Breast epithelium (tissue), 4 donors: ENCODE measurements at regions of chr6 and their contacts with region 1.

Region 1: DNA sequence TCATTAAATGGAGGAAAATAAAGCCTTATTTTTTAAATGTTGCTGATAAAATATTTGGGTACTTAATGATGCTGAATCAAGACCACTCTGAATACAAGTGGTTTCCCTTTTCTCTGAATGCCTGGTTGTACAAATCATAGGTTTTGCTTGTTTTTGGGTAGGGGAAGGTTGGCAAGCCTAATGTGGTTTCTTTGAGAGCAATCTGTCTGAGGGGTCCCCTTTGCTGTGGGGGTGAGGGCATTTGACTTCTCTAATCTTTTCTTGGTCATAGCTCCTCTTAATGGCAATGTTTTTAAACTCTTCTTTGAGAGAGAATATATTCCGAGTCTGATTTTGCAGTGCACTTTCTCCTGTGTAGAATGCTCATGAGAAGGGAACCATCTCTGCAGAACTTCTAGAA is 99.2 kb downstream of the SOX4 start:
- DNase-seq: no peak
- H3K4me3 ChIP-seq: no peak overlapping the region
- H3K27ac ChIP-seq: no peak overlapping the region
- H3K4me1 ChIP-seq: no peaks in the 10 kb centered on the region
- H3K27me3 ChIP-seq: no peaks in the 10 kb centered on the region
- CTCF ChIP-seq: no peak
- POLR2A ChIP-seq: no peak

Region 2: DNA sequence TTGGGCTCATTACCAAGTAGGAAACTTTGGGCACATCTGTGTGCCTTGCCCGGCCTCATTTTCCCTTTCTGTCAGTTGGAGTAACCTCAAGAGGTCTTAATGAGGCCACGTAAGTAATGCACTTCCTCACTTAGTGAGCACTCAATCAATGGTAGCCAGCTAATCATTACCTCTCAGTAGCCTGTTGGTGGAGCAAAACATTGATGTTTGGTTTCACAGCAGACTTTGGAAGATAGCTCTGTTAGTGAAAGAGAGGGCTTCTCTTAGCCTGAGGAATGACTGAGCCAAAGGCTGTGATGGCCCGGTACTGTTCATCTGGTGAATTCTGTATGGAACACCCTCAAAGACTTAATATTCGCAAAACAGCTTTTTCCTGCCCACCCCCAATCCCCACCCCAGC is 1911.5 kb before region 1 on chr6:
- intact Hi-C with region 1: no loop called
- DNase-seq: no peak
- H3K4me3 ChIP-seq: no peak overlapping the region
- H3K27ac ChIP-seq: no peak overlapping the region
- H3K4me1 ChIP-seq: no peaks in the 10 kb centered on the region
- H3K27me3 ChIP-seq: no peaks in the 10 kb centered on the region
- CTCF ChIP-seq: no peak
- POLR2A ChIP-seq: no peak

Region 3: DNA sequence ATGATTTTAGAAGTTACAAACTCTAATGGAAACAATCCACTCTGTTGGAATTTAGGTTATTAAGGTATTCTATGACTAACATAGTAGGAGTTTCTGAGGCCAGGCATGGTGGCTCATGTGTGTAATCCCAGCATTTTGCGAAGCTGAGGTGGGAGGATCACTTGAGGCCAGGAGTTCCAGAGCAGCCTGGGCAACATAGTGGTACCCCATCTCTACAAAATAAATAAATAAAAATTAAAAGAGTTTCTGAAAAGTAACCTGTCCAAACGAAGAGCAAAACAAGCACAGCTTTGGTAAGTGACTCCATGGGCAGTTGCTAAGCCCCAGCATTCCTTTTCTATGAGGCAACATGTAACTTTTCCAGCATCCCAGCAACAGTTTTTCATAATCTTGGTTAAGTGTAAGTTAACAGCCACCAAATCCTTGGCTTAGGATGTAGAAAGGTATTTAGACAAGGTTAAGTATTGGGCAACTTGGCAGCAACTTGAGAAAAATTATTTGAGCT is 12.9 kb before region 1 on chr6:
- intact Hi-C with region 1: loop called (anchors 1 kb)
- DNase-seq: no peak
- H3K4me3 ChIP-seq: no peak overlapping the region
- H3K27ac ChIP-seq: peak overlapping the region; percentile 82 to 90
- H3K4me1 ChIP-seq: no peaks in the 10 kb centered on the region
- H3K27me3 ChIP-seq: no peaks in the 10 kb centered on the region
- CTCF ChIP-seq: no peak
- POLR2A ChIP-seq: no peak

Region 4: GRCh38 chr6:22497276-22497675 is 804.6 kb after region 1 on chr6:
- intact Hi-C with region 1: no loop called
- DNase-seq: no peak
- H3K4me3 ChIP-seq: no peak overlapping the region
- H3K27ac ChIP-seq: no peak overlapping the region
- H3K4me1 ChIP-seq: no peaks in the 10 kb centered on the region
- H3K27me3 ChIP-seq: no peaks in the 10 kb centered on the region
- CTCF ChIP-seq: no peak
- POLR2A ChIP-seq: no peak